ENCODE measurements at regions of chr4 and their contacts with region 1.

Region 1: GRCh38 chr4:5050520-5051277 is 581 bp upstream of the STK32B start:
- DNase-seq: peak; percentile 52
- H3K4me3 ChIP-seq: peak overlapping the region; percentile 66
- H3K27ac ChIP-seq: no peak overlapping the region
- H3K27me3 ChIP-seq: peaks cover 2% of the 10 kb centered on the region
- CTCF ChIP-seq: peak; percentile 87

Region 2: DNA sequence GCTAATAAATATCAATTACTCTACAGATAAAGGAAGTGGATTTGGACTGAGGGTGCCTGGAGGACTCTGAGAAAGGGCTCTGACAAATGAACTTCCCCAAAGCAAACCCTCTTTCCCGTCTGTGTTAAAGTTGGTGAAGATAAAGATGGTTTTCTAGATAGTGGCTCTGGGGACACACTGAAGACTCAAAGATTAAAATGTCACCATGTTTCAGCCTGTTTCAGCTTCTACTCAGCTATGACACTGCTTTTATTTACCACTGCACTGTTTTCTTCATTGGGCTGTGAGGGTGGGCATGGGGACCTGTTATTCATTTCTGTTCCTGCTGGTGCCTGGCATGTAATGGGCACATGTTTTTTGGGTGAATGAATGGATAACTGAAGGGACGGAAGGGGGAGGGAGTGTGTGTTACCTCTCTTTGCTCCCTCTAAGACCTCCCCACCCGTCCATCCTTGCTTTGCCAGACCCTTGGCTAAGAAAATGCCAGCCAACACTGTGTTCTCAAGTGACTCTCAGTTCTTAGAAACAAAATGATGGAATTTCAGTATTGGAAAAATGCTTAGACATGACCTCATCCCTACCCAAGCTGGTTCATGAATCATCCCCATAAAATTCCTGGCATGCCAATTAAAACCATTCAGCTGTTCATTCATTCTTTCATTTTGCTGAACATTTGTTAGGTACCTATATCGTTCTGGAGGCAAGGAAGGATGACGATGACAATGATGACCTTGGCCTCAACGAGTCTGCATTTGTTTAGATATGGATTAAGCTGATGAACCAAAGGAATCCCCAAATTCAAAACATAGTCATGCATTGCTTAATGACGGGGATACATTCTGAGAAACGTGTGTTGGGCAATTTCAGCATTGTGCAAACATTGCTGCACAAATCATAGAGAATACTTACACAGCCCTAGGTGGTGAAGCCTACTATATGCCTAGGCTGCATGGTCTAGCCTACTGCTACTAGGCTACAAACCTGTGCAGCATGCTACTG is 12.8 kb before region 1 on chr4:
- CTCF ChIA-PET with region 1: interaction called, 25 read pairs
- POLR2A ChIA-PET with region 1: interaction called, 11 read pairs
- DNase-seq: peak; percentile 94
- H3K4me3 ChIP-seq: no peak overlapping the region
- H3K27ac ChIP-seq: peak overlapping the region; percentile 89
- H3K27me3 ChIP-seq: no peaks in the 10 kb centered on the region
- CTCF ChIP-seq: no peak

Region 3: DNA sequence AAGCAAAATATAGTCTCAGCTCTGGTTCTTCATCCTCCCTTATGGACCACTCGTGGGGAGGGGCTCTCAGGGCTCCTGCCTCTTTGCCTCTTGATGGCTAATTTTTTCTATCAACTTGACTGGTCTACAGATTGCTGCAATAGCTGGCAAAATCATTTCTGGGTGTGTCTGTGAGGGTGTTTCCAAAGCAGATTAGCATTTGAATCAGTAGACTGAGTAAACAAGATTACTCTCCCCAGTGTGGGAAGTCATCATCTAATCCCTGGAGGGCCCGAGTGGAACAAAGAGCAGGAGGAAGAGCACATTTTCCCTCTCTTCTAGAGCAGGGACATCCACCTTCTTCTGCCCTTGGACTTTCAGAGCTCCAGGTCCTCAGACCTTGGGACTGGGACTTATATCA is 154.1 kb after region 1 on chr4:
- CTCF ChIA-PET with region 1: no interaction called
- POLR2A ChIA-PET with region 1: no interaction called
- DNase-seq: no peak
- H3K4me3 ChIP-seq: no peak overlapping the region
- H3K27ac ChIP-seq: no peak overlapping the region
- H3K27me3 ChIP-seq: no peaks in the 10 kb centered on the region
- CTCF ChIP-seq: no peak

Region 4: GRCh38 chr4:5460116-5460801 is 409.6 kb after region 1 on chr4:
- CTCF ChIA-PET with region 1: interaction called, 13 read pairs
- POLR2A ChIA-PET with region 1: no interaction called
- DNase-seq: peak; percentile 3
- H3K4me3 ChIP-seq: no peak overlapping the region
- H3K27ac ChIP-seq: no peak overlapping the region
- H3K27me3 ChIP-seq: no peaks in the 10 kb centered on the region
- CTCF ChIP-seq: peak; percentile 73

Region 5: DNA sequence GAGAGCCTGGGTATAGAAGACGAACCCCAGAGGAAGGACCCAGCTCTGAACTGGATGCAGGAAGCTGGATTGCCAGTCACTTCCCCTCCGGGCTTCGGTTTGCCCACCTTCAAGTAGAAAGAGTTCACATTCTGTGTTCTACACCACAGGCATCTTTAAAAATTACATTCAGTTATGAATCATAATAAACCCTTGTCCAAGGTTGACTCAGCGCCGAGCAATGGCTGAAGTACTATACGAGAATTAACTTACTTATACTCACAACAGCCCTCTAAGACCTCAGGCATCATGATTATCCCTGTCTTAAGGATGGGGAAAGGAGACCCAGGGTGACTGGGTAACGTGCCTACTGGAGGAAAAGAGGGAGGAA is 585.1 kb after region 1 on chr4:
- CTCF ChIA-PET with region 1: no interaction called
- POLR2A ChIA-PET with region 1: interaction called, 10 read pairs
- DNase-seq: peak; percentile 38
- H3K4me3 ChIP-seq: no peak overlapping the region
- H3K27ac ChIP-seq: peak overlapping the region; percentile 57
- H3K27me3 ChIP-seq: no peaks in the 10 kb centered on the region
- CTCF ChIP-seq: no peak

Measured in AG04450 (cell line).